ENCODE measurements at regions of chr5 and their contacts with region 1.

Region 1: DNA sequence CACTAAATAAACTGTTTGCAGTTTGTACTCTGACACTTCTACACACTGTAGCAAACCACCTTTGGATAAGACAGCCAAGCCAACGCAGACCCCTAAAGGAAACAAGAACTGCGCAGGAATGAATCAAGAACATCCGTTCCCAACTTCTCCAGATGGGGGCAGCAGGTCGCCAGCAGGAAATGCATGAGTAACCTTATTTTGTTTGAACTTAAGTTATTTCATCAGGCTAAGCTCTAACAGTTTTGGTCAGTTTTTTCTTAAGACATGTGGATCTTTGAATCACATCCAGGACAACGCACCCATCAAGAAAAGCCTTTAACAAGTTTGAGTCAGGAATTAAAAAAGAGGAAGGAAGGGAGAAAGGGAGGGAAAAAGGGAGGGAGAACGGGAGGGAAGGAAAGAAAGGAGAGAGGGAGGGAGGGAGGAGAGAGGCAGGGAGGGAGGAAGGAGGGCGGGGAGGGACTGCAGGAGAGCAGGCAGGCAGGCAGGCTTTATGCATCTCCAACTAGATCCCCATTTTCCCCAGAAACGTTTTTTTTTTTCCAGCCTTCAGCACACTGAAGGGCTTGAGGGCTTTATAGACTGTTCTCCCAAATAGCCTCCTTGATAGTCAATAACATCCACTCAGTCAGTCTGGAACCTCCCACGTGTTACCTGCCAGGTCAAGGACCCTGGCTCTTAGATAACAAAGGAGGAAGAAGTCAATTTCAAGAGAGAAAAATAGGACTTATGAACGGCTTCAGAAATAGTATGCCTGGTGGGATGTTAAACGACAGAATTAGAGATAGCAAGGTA is 22.2 kb downstream of the BHMT start:
- DNase-seq: peak; percentile 86
- H3K4me3 ChIP-seq: no peak overlapping the region
- H3K27ac ChIP-seq: peak overlapping the region; percentile 47 to 63
- H3K4me1 ChIP-seq: no peaks in the 10 kb centered on the region
- H3K27me3 ChIP-seq: no peaks in the 10 kb centered on the region
- CTCF ChIP-seq: peak; percentile 54 to 72 (median 56)
- POLR2A ChIP-seq: no peak

Region 2: DNA sequence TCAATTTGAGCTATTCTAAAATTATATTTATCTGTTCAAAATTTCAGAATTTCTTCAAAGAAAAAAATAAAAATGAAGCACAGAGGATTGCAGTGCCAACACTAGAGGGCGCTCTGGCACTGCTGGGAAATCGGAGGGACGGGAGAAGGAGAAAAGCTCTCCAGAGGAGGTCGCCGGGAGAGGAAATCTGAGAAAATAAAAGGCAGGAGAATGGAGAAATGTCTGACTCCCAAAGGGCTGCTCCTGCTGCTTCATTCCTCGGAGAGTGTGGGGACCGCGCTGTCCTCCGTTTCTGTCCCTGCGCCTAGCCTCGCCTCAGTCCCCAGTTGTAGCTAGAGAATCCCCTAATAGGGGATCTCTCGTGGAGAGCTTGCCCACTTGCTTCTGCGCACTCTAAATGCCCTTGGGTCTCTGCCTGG is 108.8 kb before region 1 on chr5:
- intact Hi-C with region 1: loop called (anchors 5 kb)
- DNase-seq: peak; percentile 66
- H3K4me3 ChIP-seq: peak overlapping the region in 1 of 2 donors; percentile 47
- H3K27ac ChIP-seq: no peak overlapping the region
- H3K4me1 ChIP-seq: peaks cover 5% of the 10 kb centered on the region
- H3K27me3 ChIP-seq: no peaks in the 10 kb centered on the region
- CTCF ChIP-seq: peak; percentile 78 to 96 (median 85)
- POLR2A ChIP-seq: no peak

Region 3: GRCh38 chr5:79263290-79263689 is 129.4 kb after region 1 on chr5:
- intact Hi-C with region 1: no loop called
- DNase-seq: no peak
- H3K4me3 ChIP-seq: no peak overlapping the region
- H3K27ac ChIP-seq: no peak overlapping the region
- H3K4me1 ChIP-seq: no peaks in the 10 kb centered on the region
- H3K27me3 ChIP-seq: no peaks in the 10 kb centered on the region
- CTCF ChIP-seq: no peak
- POLR2A ChIP-seq: no peak

Region 4: DNA sequence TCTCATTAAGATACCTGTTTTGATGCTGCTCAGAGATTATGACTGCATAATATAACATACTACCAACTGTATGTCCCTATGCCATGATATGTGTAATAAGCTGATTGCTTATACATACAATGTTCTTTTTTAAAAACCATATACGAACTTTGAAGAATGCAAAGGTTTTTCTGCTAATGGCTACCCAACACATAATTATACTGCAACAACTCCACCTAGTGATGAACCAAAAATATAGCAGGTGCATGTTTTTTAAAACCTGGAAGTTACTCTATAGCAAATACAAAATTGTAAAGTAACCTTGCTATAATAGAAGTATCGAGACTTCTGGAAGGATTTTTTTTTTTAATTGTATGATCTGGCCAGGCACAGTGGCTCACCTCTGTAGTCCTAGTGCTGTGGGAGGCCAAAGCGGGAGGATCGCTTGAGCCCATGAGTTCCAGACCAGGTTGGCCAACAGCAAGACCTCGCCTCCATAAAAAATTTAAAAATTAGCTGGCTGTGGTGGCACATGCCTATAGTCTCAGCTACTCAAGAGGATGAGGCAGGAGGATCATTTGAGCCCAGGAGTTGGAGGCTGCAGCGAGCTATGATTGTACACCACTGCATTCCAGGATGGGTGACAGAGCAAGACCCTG is 331.0 kb after region 1 on chr5:
- intact Hi-C with region 1: loop called (anchors 10 kb)
- DNase-seq: no peak
- H3K4me3 ChIP-seq: no peak overlapping the region
- H3K27ac ChIP-seq: no peak overlapping the region
- H3K4me1 ChIP-seq: no peaks in the 10 kb centered on the region
- H3K27me3 ChIP-seq: no peaks in the 10 kb centered on the region
- CTCF ChIP-seq: peak in 2 of 3 experiments; percentile 49 to 50
- POLR2A ChIP-seq: no peak

Measured in testis (tissue), 5 donors.